ENCODE measurements at regions of chr2 and their contacts with region 1.

Region 1: DNA sequence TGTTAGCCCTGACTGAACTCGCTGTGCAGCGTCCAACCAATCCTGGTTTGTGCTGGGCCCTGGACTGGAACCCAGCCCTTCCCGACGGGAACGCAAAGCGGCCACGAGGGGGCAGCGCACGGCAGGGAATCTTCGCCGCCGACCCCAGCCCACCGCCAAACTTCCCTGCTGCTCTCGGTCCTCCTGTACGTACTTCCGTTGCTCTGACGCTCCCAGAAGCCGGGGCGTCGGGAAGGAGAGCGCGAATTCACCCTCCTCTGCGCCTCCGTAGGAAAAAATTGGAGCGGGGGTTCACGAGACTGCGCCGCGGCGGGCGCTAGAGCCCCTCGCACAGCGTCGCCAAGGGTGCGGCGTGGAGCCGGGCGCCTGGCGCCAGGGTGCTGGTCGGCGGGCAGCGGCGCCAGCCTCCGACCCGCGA is 948 bp upstream of the SH3RF3 start:
- DNase-seq: peak; percentile 89 to 95
- ATAC-seq: peak; percentile 87
- H3K4me3 ChIP-seq: peak overlapping the region; percentile 58 to 81
- H3K27ac ChIP-seq: peak overlapping the region; percentile 62 to 69
- H3K4me1 ChIP-seq: no peaks in the 10 kb centered on the region
- H3K27me3 ChIP-seq: no peaks in the 10 kb centered on the region

Region 2: GRCh38 chr2:109164739-109165221 is 36.7 kb after region 1 on chr2:
- intact Hi-C with region 1: loop called (anchors 2 to 5 kb)
- DNase-seq: peak; percentile 71 to 73
- ATAC-seq: peak; percentile 49
- H3K4me3 ChIP-seq: no peak overlapping the region
- H3K27ac ChIP-seq: peak overlapping the region; percentile 22 to 76
- H3K4me1 ChIP-seq: peaks cover 8 to 9% of the 10 kb centered on the region in 2 donors
- H3K27me3 ChIP-seq: no peaks in the 10 kb centered on the region

Region 3: DNA sequence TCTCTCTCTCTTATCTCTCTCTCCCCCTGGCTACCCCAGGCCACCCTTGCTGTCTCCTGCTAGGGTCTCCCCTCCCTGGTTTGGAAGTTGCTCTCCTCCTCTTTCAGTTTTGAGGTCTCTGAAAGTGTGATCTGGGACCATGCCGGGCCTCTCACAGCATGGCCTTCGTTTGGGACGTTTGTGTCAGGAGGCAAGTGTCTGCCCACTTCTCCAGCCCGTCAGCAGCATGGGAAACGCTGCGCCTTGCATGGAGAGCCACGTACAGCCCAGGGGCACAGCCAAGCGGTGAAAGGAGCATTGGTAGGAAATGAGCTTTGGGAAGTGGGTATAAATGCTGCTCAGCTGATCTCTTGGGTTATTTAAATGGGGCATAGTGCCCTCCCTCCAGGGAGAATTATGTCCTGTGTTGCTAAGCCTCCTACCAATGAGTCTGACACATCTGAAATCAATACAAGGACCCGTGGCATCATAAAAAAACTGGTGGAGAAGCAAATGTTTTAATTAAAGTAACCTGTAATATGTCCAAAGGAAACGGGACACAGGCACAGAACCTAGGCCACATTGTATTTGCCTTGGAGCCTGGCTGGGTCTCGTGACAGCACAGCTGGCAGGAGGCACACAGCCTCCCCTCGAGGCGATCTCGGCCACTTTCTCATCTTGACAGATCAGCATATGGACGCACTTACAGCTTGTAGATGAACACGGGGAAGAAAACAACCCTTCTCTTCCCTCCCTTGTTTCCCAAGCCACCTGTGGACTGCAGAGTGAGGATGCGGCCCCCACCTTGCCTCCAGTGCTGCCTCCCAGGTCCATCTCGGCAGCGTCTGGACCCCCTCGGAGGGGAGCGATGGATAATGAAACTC is 73.6 kb after region 1 on chr2:
- intact Hi-C with region 1: loop called (anchors 2 to 5 kb)
- DNase-seq: peak in 1 of 2 donors; percentile 70
- ATAC-seq: peak; percentile 59
- H3K4me3 ChIP-seq: no peak overlapping the region
- H3K27ac ChIP-seq: peak overlapping the region; percentile 31 to 62
- H3K4me1 ChIP-seq: no peaks in the 10 kb centered on the region
- H3K27me3 ChIP-seq: no peaks in the 10 kb centered on the region

Region 4: GRCh38 chr2:109322111-109322510 is 194.1 kb after region 1 on chr2:
- intact Hi-C with region 1: loop called (anchors 5 kb)
- DNase-seq: peak; percentile 93 to 94
- ATAC-seq: peak; percentile 79
- H3K4me3 ChIP-seq: no peak overlapping the region
- H3K27ac ChIP-seq: peak overlapping the region; percentile 97
- H3K4me1 ChIP-seq: peaks cover 4 to 9% of the 10 kb centered on the region in 2 donors
- H3K27me3 ChIP-seq: no peaks in the 10 kb centered on the region

Region 5: DNA sequence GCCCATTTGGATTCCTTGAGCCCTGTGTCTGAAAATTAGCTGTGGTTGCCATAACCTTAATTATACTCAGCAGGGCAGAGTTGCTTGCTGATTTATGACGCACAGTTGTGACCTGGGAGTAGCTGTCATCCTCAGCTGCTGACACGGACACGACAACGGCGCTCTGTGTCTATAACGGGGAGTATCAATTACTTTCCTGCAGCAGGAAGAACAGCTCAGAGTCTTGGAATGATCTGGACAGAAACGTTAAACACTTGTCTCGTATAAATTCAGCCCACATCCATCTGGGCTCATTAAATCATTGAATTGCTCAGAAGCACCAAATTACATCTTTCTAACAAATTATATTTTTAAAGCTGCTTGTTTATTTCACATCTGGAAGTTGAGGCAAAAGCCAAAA is 369.4 kb after region 1 on chr2:
- intact Hi-C with region 1: loop called (anchors 1 to 5 kb)
- DNase-seq: no peak
- ATAC-seq: no peak
- H3K4me3 ChIP-seq: no peak overlapping the region
- H3K27ac ChIP-seq: no peak overlapping the region
- H3K4me1 ChIP-seq: no peaks in the 10 kb centered on the region
- H3K27me3 ChIP-seq: no peaks in the 10 kb centered on the region

Region 6: GRCh38 chr2:109510136-109511028 is 382.3 kb after region 1 on chr2:
- intact Hi-C with region 1: loop called (anchors 1 to 2 kb)
- DNase-seq: peak; percentile 83 to 90
- ATAC-seq: peak; percentile 65
- H3K4me3 ChIP-seq: no peak overlapping the region
- H3K27ac ChIP-seq: no peak overlapping the region
- H3K4me1 ChIP-seq: no peaks in the 10 kb centered on the region
- H3K27me3 ChIP-seq: no peaks in the 10 kb centered on the region